OCI-LY7 (cell line): ENCODE measurements at regions of chr9 and their contacts with region 1.

Region 1: DNA sequence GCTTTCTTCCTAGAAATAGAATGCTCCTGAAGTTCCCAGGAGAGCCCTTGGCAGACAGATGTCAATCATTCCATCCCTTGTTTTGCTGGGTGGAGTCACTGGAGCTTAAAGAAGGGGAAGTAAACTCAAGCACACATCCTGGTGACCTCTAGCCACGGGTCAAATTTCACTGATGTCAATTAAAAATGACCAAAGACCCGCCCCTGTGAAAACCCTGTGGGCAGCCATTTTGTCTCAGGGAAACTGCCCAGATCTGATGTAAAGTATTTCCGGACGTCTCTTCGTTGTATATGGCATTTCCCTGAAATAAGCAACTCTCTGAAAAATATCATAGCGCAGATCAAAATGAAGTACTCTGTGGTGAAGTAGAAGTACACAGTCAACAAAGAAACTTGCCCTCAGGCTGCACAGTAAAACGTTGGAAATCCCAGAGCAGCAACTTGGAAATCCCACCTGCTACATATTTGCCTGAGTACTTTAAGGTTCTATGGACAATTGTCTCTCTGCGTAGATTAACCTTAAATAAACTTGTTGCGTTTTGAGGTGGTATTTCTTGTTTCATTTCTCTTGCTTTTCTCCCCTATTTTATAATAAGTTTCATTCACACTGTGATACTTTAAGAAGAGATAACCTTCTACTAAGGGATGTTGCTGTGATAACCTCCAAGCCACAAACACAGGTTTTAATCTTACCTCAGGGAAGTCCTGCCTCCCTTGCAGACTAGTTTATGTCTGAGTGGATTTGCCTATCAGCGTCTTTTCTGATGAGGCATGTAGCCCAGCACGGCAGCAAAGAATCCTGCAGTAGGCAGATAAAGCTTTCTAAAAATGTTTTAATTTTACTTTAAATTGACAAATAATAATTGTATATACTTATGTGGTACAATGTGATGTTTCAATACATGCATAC is 60.9 kb upstream of the PIP5K1B start:
- DNase-seq: peak; percentile 94
- H3K4me3 ChIP-seq: peak overlapping the region; percentile 58
- H3K27ac ChIP-seq: peak overlapping the region; percentile 99
- H3K4me1 ChIP-seq: peaks cover 80% of the 10 kb centered on the region
- CTCF ChIP-seq: no peak

Region 2: GRCh38 chr9:68577774-68578591 is 66.2 kb before region 1 on chr9:
- CTCF ChIA-PET with region 1: interaction called, 3 read pairs
- POLR2A ChIA-PET with region 1: interaction called, 7 read pairs
- intact Hi-C with region 1: loop called (anchors 1 kb)
- DNase-seq: peak; percentile 82
- H3K4me3 ChIP-seq: peak overlapping the region; percentile 44
- H3K27ac ChIP-seq: peak overlapping the region; percentile 88
- H3K4me1 ChIP-seq: peaks cover 78% of the 10 kb centered on the region
- CTCF ChIP-seq: no peak

Region 3: DNA sequence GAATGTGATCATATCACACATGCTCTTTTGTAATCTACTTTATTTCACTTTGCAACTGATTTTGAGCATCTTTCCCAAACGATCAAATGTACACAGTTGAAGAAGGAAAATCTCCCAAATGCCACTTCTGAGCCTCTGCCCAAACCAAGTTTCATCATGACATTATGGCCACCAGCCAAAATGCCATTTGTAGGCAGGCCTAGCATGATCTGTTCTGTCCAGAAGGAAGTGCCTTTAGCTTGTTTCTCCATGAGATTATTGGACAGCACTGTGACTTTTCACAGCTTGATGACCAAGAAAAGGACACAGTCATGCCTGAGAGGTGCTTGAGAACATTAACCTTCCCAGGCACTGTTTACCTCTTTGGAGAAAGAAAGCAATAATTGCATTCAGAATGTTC is 12.3 kb before region 1 on chr9:
- CTCF ChIA-PET with region 1: interaction called, 5 read pairs
- POLR2A ChIA-PET with region 1: interaction called, 24 read pairs
- intact Hi-C with region 1: no loop called
- DNase-seq: no peak
- H3K4me3 ChIP-seq: no peak overlapping the region
- H3K27ac ChIP-seq: no peak overlapping the region
- H3K4me1 ChIP-seq: peaks cover 33% of the 10 kb centered on the region
- CTCF ChIP-seq: no peak

Region 4: GRCh38 chr9:68685770-68686169 is 41.6 kb after region 1 on chr9:
- CTCF ChIA-PET with region 1: interaction called, 4 read pairs
- POLR2A ChIA-PET with region 1: interaction called, 8 read pairs
- intact Hi-C with region 1: loop called (anchors 2 kb)
- DNase-seq: peak; percentile 85
- H3K4me3 ChIP-seq: no peak overlapping the region
- H3K27ac ChIP-seq: no peak overlapping the region
- H3K4me1 ChIP-seq: peaks cover 39% of the 10 kb centered on the region
- CTCF ChIP-seq: peak; percentile 91

Region 5: GRCh38 chr9:68704814-68705530 is 60.8 kb after region 1 on chr9 and contains the start of gene PIP5K1B:
- CTCF ChIA-PET with region 1: no interaction called
- POLR2A ChIA-PET with region 1: interaction called, 3 read pairs
- intact Hi-C with region 1: loop called (anchors 2 kb)
- DNase-seq: peak; percentile 92
- H3K4me3 ChIP-seq: peak within 1 kb of the TSS; percentile 82
- H3K27ac ChIP-seq: peak within 1 kb of the TSS; percentile 59
- H3K4me1 ChIP-seq: peaks cover 43% of the 10 kb centered on the region
- CTCF ChIP-seq: peak; percentile 23; the same call in 1 of the 2 replicates
- total RNA-seq, gene PIP5K1B: 3.8 and 4.8 TPM in 2 replicates

Region 6: GRCh38 chr9:68779558-68780384 is 135.6 kb after region 1 on chr9:
- CTCF ChIA-PET with region 1: no interaction called
- POLR2A ChIA-PET with region 1: no interaction called
- intact Hi-C with region 1: loop called (anchors 2 kb)
- DNase-seq: peak; percentile 96
- H3K4me3 ChIP-seq: peak overlapping the region; percentile 85
- H3K27ac ChIP-seq: peak overlapping the region; percentile 70
- H3K4me1 ChIP-seq: peaks cover 41% of the 10 kb centered on the region
- CTCF ChIP-seq: peak; percentile 78

Region 7: GRCh38 chr9:68791169-68791568 is 147.0 kb after region 1 on chr9:
- CTCF ChIA-PET with region 1: no interaction called
- POLR2A ChIA-PET with region 1: no interaction called
- intact Hi-C with region 1: no loop called
- DNase-seq: no peak
- H3K4me3 ChIP-seq: no peak overlapping the region
- H3K27ac ChIP-seq: no peak overlapping the region
- H3K4me1 ChIP-seq: no peaks in the 10 kb centered on the region
- CTCF ChIP-seq: no peak

Region 8: GRCh38 chr9:68949271-68950000 is 305.3 kb after region 1 on chr9:
- CTCF ChIA-PET with region 1: no interaction called
- POLR2A ChIA-PET with region 1: interaction called, 4 read pairs
- intact Hi-C with region 1: loop called (anchors 2 kb)
- DNase-seq: peak; percentile 76
- H3K4me3 ChIP-seq: no peak overlapping the region
- H3K27ac ChIP-seq: peak overlapping the region; percentile 39
- H3K4me1 ChIP-seq: peaks cover 63% of the 10 kb centered on the region
- CTCF ChIP-seq: peak; percentile 78